ENCODE measurements at regions of chr1 and their contacts with region 1.

Region 1: GRCh38 chr1:48202030-48202752 is 20.3 kb upstream of the SLC5A9 start:
- DNase-seq: peak; percentile 64 to 74 (median 72)
- ATAC-seq: peak; percentile 86 to 95 (median 90)
- H3K4me3 ChIP-seq: no peak overlapping the region
- H3K27ac ChIP-seq: no peak overlapping the region
- H3K4me1 ChIP-seq: no peaks in the 10 kb centered on the region
- H3K27me3 ChIP-seq: no peaks in the 10 kb centered on the region
- CTCF ChIP-seq: peak; percentile 75 to 85 (median 81)
- POLR2A ChIP-seq: no peak

Region 2: GRCh38 chr1:48109390-48110013 is 92.7 kb before region 1 on chr1:
- intact Hi-C with region 1: loop called (anchors 5 kb)
- DNase-seq: no peak
- ATAC-seq: peak; percentile 82 to 86 (median 83)
- H3K4me3 ChIP-seq: no peak overlapping the region
- H3K27ac ChIP-seq: no peak overlapping the region
- H3K4me1 ChIP-seq: no peaks in the 10 kb centered on the region
- H3K27me3 ChIP-seq: no peaks in the 10 kb centered on the region
- CTCF ChIP-seq: peak; percentile 82 to 89 (median 84)
- POLR2A ChIP-seq: no peak

Region 3: DNA sequence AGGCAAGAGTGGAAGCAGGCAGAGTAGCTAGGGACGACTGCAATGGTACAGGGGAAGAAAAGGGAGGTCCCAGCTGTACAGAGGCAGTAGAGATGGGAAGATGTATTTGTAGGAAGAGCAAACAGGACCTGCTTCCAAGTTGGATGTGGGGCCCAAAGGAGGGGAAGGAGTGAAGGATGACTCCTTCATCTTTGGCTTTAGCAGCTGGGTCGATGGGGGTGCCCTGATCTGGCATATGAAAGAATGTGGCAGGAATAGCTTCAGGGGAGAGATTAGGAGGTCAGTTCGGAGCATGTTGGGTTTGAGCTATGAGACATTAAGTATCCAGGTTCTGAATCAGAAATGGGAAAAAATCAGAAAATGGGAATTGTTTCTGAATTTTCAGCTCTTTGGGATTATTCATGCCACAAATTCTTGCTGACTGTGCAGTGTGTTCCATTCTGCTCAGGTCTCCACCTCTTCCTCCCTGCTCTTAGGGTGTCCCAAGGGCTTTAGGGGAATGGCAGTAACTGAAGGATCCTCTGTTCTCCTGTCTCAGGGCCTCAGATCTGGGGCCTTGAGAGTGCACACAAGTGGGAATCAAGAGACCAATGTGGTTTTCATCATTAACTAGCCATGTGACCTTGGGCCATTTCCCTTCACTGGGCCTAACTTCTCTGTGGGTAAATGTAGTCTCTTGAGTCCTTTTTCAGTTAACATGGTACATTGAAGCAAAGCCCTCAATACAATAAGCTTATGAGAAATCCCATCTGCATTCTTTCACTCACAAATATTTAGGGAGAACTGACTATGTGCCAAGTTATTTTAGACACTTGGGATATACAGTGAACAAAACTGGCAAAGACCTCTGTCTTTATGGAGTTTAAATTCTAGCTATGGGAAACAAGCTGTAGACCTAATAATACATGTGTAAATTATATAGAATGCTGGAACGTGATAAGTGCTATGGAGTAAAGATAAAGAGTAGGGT is 345.3 kb after region 1 on chr1:
- intact Hi-C with region 1: no loop called
- DNase-seq: no peak
- ATAC-seq: no peak
- H3K4me3 ChIP-seq: no peak overlapping the region
- H3K27ac ChIP-seq: no peak overlapping the region
- H3K4me1 ChIP-seq: no peaks in the 10 kb centered on the region
- H3K27me3 ChIP-seq: no peaks in the 10 kb centered on the region
- CTCF ChIP-seq: no peak
- POLR2A ChIP-seq: no peak

Measured in right lobe of liver (tissue), 6 donors.